ENCODE measurements at regions of chr3 and their contacts with region 1.

Region 1: DNA sequence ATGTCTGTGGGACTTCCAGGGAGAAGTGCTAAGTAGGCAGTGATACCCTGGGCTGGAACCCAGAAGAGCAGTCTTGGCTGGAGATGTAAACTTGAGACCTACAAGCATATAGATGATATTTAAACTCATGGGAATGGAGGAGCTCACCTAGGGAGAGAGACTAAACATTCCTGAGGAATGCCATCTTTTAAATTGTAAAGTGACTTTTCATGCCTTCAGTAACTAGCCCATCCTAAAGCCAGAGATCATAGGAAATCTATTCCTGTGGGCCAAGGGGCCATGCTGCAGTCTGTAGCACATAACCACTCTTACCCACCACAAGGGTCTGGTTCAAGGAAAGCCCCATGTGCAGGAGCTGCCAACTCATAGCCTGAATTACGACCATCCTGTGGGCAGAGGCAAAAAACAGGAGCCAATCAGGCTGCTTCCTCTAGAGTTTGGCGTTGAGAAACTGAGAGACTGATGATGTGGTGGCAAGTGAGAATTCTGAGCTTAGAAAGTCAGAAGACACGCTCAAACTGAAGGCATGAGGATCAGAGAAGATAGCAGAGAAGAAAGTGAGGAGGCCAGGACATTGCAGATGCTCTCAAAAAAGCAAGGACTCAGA is 37.5 kb downstream of the CTDSPL start:
- DNase-seq: no peak
- ATAC-seq: peak; percentile 32
- H3K4me3 Mint-ChIP-seq: no peak overlapping the region
- H3K27ac Mint-ChIP-seq: no peak overlapping the region
- H3K4me1 Mint-ChIP-seq: peaks cover 46% of the 10 kb centered on the region
- H3K27me3 Mint-ChIP-seq: peaks cover 7% of the 10 kb centered on the region

Region 2: GRCh38 chr3:37922721-37923568 is 23.7 kb after region 1 on chr3:
- CTCF ChIA-PET with region 1: interaction called, 16 read pairs
- POLR2A ChIA-PET with region 1: no interaction called
- DNase-seq: no peak
- ATAC-seq: peak; percentile 42
- H3K4me3 Mint-ChIP-seq: no peak overlapping the region
- H3K27ac Mint-ChIP-seq: no peak overlapping the region
- H3K4me1 Mint-ChIP-seq: peaks cover 14% of the 10 kb centered on the region
- H3K27me3 Mint-ChIP-seq: peaks cover 12% of the 10 kb centered on the region

Region 3: DNA sequence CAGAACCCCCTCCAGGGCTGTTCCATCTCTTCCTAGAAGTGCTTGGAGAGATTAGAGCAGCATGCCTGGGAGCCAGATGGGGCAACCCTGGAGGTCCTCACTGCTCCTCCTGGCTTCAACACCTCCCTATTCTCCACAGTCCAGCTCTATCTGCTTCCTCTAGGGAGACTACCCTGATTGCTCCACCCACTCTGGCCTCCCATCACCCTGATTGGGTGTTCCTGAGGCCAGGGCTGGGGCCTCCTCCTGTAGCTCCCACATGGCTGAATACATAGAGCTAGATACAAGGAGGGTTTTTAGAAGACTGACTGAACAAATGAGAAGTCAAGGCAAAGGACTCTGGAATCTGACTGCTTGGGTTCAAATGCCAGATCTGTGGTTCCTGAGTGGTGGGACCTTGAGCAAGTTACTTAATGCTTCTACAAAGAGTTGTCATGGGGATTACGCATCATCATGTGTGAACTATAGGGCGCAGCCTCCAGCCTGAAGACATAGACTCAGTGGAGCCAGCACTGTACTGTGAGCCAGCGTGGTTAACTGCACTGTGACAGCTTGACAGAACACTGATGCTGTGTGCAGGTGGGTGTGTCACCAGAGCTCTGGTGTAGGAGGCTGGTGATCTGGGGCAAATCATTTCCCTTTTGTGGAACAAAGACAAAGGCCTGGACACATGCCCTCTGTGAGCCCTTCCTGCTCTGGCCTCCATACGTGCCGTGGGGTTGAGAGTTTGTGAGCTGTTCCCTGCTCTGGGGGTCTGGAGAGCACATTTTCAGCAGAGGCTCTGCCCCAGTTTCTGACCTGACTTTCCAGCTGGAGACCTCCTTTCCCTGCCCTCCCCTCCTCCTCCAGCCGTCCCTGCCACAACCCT is 675.4 kb after region 1 on chr3:
- CTCF ChIA-PET with region 1: no interaction called
- POLR2A ChIA-PET with region 1: no interaction called
- DNase-seq: peak; percentile 8
- ATAC-seq: no peak
- H3K4me3 Mint-ChIP-seq: no peak overlapping the region
- H3K27ac Mint-ChIP-seq: no peak overlapping the region
- H3K4me1 Mint-ChIP-seq: no peaks in the 10 kb centered on the region
- H3K27me3 Mint-ChIP-seq: peaks cover 2% of the 10 kb centered on the region

Measured in activated CD8-positive, alpha-beta T cell treated with anti-CD3 and anti-CD28 coated beads, Interleukin-2, amount 10 ng/mL, durations not matched to agents 7 days and 5 days (primary cell).